ENCODE measurements at regions of chr17 and their contacts with region 1.

Region 1: DNA sequence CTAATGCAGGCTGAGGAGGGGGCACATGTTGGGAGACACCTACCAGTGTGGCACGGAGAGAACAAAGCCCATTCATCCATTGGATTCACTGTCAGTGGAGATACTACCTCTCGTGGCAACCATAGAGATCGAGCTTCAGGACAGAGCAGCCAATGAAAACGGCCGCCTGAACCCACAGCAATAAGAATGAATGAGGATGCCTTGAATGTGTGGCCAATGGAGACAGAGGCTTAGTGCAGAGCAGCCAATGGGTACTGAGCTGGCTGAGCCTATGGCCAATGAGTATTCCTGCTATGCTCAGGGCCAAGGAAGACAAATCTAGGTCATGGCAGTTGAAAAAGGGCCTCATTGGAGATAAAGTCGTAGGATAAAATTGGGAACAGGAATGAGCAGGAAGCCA is 10.9 kb downstream of the ARHGEF15 start:
- DNase-seq: no peak
- H3K4me3 ChIP-seq: no peak overlapping the region
- H3K27ac ChIP-seq: no peak overlapping the region
- H3K4me1 ChIP-seq: peaks cover 6% of the 10 kb centered on the region
- H3K27me3 ChIP-seq: no peaks in the 10 kb centered on the region
- CTCF ChIP-seq: no peak
- POLR2A ChIP-seq: no peak

Region 2: GRCh38 chr17:8268550-8269298 is 52.3 kb before region 1 on chr17:
- intact Hi-C with region 1: loop called (anchors 2 kb)
- DNase-seq: no peak
- H3K4me3 ChIP-seq: no peak overlapping the region
- H3K27ac ChIP-seq: no peak overlapping the region
- H3K4me1 ChIP-seq: no peaks in the 10 kb centered on the region
- H3K27me3 ChIP-seq: no peaks in the 10 kb centered on the region
- CTCF ChIP-seq: no peak
- POLR2A ChIP-seq: no peak